RWPE1 (cell line): ENCODE measurements at regions of chr14 and their contacts with region 1.

Region 1: DNA sequence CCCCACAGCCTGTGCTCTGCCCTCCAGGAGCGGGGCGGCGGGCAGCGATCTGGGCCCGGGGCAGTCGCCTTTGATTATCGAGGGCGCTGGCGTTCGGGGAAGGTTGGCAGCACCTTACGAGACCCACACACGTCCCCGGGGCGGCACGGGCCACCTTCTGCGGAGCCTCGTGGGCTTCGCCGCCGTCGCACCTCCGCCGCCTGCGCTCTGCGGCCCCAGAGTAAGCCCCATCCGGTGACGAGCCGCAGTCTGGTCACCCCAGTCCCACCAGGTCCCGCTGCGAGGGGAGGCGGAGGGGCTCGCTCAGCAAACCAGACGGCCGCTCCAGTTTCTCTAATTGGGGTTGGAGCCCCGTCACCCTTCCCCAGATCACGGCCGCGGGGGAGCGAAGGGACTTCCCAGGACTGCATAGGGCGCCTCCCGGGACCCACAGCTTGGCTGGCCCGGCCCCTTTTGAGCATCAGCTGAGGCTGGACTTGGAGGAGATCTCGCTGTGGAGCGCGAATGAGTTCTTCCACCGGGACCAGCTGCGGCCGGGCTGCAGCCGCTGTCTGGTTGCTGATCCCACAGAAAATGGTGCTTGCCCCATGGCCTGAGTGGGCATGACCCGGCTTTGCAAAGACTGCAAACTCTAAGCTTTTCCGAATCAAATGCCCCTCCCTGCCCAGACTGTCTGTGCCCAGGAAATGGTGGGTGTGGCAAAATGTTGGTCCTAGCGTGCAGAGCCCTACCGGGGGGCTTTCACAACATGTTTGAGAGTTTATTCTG is 560 bp downstream of the LGALS3 start:
- DNase-seq: peak; percentile 59
- H3K27ac ChIP-seq: peak overlapping the region; percentile 88
- CTCF ChIP-seq: no peak

Region 2: GRCh38 chr14:55102141-55102621 is 27.4 kb before region 1 on chr14:
- CTCF ChIA-PET with region 1: interaction called, 3 read pairs
- POLR2A ChIA-PET with region 1: interaction called, 16 read pairs
- DNase-seq: peak; percentile 59
- H3K27ac ChIP-seq: peak overlapping the region; percentile 93
- CTCF ChIP-seq: no peak

Region 3: GRCh38 chr14:55180434-55180833 is 50.8 kb after region 1 on chr14:
- CTCF ChIA-PET with region 1: no interaction called
- POLR2A ChIA-PET with region 1: no interaction called
- DNase-seq: no peak
- H3K27ac ChIP-seq: no peak overlapping the region
- CTCF ChIP-seq: no peak

Region 4: GRCh38 chr14:55191203-55192053 is 61.8 kb after region 1 on chr14 and contains the start of gene DLGAP5:
- CTCF ChIA-PET with region 1: no interaction called
- POLR2A ChIA-PET with region 1: no interaction called
- DNase-seq: peak; percentile 98
- H3K27ac ChIP-seq: peak within 1 kb of the TSS; percentile 80
- CTCF ChIP-seq: no peak